IMR-90 (cell line): ENCODE measurements at regions of chr20 and their contacts with region 1.

Region 1: DNA sequence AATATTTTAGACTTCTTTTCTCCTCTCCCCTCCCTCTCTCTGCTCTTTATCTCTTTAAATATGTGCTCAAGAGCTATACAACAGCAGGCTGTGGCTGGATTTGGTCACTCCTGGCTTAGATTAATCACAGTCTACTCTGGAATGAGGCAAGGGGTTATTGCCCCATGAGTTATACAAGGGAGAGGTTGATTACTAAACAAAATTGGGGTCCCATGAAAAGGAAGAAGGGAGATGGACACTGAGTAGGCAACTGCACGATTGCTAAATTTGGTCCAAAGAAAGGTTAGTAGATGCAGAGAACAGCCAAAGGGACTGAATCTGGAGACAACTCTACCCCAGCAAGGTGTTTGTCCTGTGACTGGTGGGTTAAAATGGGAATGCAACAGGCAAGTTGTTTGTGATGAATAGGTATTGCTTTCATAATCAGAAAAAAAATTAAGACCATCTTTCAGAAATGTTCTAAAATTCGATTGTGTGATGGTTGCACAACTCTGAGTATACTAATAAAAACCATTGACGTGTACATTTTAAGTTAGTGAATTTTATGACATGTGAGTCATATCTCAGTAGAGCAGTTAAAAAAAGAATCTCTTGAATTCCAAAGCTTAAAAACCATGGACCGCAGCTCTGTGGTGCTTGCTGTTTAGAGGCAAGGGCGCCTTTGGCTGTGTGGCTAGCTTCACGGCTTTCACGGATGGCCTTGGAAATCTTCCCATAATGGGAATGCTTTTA is 57.1 kb downstream of the KIZ start:
- DNase-seq: peak; percentile 88
- ATAC-seq: peak; percentile 94
- H3K4me3 ChIP-seq: no peak overlapping the region
- H3K27ac ChIP-seq: no peak overlapping the region; the same call in 1 of the 2 replicates
- H3K4me1 ChIP-seq: peaks cover 9% of the 10 kb centered on the region
- H3K27me3 ChIP-seq: no peaks in the 10 kb centered on the region
- CTCF ChIP-seq: no peak
- POLR2A ChIP-seq: no peak
- RAD21 ChIP-seq: no peak

Region 2: DNA sequence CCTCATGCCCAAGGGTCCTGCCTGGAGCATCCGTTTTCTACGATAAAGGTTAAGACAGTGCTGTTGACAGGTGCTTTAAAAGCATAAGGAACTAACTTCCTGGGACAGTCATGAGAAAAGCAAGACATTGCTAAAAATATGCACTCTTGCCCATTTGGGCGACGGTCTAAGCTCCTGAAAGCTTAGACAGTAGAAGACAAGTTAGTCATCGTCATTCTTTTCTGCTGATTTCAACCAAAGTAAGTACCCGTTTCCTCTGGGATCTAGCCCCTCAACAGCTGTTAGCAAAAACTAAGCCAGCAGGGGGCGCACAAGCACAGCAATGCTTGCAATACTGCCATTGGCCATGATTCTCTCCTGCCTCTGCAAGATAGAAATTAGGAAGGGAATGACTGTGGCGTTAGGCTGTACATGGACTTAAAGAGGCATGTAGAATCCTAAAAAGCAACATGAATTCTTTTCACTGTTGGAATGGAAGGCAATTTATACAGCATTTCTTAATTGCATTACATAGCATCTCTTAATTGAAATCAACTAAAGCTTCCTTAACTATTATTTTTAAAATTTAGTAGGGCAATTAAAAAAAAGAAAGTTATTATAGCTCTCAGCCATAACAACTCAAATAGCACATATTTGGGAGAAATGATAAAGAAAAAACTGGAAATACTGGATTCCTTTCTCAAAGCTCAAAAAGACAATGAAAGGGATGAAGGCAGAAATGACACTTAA is 322.8 kb before region 1 on chr20:
- CTCF ChIA-PET with region 1: no interaction called
- POLR2A ChIA-PET with region 1: no interaction called
- dilution Hi-C with region 1: no loop called
- in situ Hi-C with region 1: no loop called
- intact Hi-C with region 1: no loop called
- DNase-seq: peak; percentile 74
- ATAC-seq: peak; percentile 96
- H3K4me3 ChIP-seq: no peak overlapping the region
- H3K27ac ChIP-seq: no peak overlapping the region
- H3K4me1 ChIP-seq: no peaks in the 10 kb centered on the region
- H3K27me3 ChIP-seq: no peaks in the 10 kb centered on the region
- CTCF ChIP-seq: peak; percentile 89
- POLR2A ChIP-seq: no peak
- RAD21 ChIP-seq: peak; percentile 73

Region 3: GRCh38 chr20:20979934-20980333 is 203.1 kb before region 1 on chr20:
- CTCF ChIA-PET with region 1: no interaction called
- POLR2A ChIA-PET with region 1: no interaction called
- dilution Hi-C with region 1: no loop called
- in situ Hi-C with region 1: no loop called
- intact Hi-C with region 1: no loop called
- DNase-seq: no peak
- ATAC-seq: no peak
- H3K4me3 ChIP-seq: no peak overlapping the region
- H3K27ac ChIP-seq: no peak overlapping the region
- H3K4me1 ChIP-seq: no peaks in the 10 kb centered on the region
- H3K27me3 ChIP-seq: no peaks in the 10 kb centered on the region
- CTCF ChIP-seq: no peak
- POLR2A ChIP-seq: no peak
- RAD21 ChIP-seq: no peak

Region 4: GRCh38 chr20:21156266-21156665 is 26.7 kb before region 1 on chr20:
- CTCF ChIA-PET with region 1: no interaction called
- POLR2A ChIA-PET with region 1: no interaction called
- dilution Hi-C with region 1: no loop called
- in situ Hi-C with region 1: no loop called
- intact Hi-C with region 1: loop called (anchors 1 kb)
- DNase-seq: peak; percentile 77
- ATAC-seq: peak; percentile 92
- H3K4me3 ChIP-seq: no peak overlapping the region
- H3K27ac ChIP-seq: no peak overlapping the region
- H3K4me1 ChIP-seq: peaks cover 6% of the 10 kb centered on the region
- H3K27me3 ChIP-seq: no peaks in the 10 kb centered on the region
- CTCF ChIP-seq: no peak
- POLR2A ChIP-seq: no peak
- RAD21 ChIP-seq: no peak